ENCODE measurements at regions of chr3 and their contacts with region 1.

Region 1: DNA sequence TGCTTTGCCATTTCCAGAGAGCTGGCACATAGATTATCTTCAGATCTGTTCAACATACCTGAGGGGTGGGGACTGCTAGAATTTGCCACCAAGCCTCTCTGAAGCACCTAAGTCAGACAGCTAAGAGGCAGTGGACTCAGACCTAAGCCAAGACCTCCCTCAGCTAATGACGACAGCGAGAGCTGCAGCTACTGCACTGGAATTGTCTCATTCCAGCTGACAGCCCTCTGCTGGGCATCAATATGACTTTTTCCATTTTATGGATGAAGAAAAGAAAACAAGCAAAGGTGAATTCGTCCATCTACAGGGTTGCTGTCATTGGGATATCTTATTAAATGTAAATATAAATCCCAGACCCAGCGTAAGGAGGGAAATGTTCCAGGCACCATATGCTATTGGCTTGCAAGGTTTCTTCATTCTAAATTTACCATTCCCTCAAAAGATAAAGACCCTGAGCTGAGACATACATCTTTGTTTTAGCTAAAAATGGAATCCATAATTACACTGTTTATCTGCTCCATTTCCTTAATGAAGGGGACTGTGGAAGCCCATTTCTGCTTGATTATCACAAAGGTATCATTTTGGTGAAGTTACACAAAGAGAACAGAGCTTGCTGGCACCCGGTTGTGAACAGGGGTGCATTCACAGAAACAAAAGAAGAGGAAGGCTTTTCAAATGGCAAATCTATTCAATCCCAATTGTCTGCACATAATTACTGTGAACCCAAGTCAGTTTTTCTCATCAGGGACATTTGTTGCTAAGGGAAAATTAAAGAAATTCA is 85.5 kb upstream of the LRTM1 start:
- DNase-seq: no peak
- H3K4me3 ChIP-seq: no peak overlapping the region
- H3K27ac ChIP-seq: no peak overlapping the region
- H3K27me3 ChIP-seq: no peaks in the 10 kb centered on the region
- CTCF ChIP-seq: peak in 30 of 56 donors; percentile 11 to 61 (median 30)

Region 2: DNA sequence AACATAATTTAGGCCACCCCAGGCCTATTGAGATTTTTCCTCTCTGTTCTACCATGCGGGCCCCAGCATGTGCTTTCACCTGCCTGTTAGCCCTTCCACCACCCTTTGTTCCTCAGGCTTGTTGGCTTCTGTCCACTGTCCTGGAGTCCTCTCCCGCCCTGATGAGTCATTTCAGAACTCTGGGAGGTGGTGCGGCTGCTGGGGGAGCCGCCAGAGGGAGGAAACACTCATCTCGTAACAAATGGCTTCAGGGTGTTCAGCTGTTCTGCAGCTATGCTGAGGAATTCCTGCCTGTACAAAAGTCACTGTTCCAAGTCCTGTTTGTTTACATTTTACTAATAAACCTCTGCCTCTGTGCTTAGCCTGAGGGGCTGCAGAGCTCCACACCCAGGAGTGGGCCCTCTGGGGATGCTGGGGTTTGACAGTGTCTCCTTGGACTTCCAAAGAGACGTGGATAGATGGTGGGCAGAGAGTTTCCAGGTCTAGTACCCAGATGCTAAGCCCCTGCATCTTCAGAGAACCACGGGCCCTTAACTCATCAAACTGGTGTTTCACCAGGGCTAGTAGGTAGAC is 121.7 kb before region 1 on chr3:
- intact Hi-C with region 1: loop called (anchors 10 kb)
- DNase-seq: peak in 9 of 10 donors; percentile 7 to 82 (median 61)
- H3K4me3 ChIP-seq: no peak overlapping the region
- H3K27ac ChIP-seq: peak overlapping the region in 40 of 59 donors; percentile 7 to 77 (median 50)
- H3K27me3 ChIP-seq: no peaks in the 10 kb centered on the region
- CTCF ChIP-seq: peak in 42 of 56 donors; percentile 10 to 57 (median 32)

Region 3: DNA sequence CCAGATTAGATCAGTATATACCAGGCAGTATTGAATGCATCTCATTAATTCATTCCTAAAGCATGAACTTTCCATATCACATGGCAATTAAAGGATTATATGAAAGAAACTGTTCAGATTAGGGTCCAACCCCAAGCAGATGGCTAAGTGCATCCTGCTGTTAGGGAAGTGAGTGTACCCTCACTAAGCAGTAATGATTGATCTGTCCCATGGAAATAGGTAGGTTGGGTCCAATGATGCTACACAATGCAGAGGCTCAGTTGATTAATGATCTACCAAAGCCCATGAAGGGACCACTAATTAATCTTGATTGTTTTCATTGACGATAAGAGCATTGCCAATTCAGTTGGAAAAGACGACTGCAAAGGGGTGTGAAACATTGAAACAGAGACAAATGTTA is 108.9 kb after region 1 on chr3:
- intact Hi-C with region 1: no loop called
- DNase-seq: no peak
- H3K4me3 ChIP-seq: no peak overlapping the region
- H3K27ac ChIP-seq: no peak overlapping the region
- H3K27me3 ChIP-seq: peaks cover 0 to 35% (median 3%) of the 10 kb centered on the region in 45 donors
- CTCF ChIP-seq: no peak

Measured in dorsolateral prefrontal cortex (tissue), 120 donors.